GM10248 (cell line): ENCODE measurements at regions of chr2 and their contacts with region 1.

Region 1: DNA sequence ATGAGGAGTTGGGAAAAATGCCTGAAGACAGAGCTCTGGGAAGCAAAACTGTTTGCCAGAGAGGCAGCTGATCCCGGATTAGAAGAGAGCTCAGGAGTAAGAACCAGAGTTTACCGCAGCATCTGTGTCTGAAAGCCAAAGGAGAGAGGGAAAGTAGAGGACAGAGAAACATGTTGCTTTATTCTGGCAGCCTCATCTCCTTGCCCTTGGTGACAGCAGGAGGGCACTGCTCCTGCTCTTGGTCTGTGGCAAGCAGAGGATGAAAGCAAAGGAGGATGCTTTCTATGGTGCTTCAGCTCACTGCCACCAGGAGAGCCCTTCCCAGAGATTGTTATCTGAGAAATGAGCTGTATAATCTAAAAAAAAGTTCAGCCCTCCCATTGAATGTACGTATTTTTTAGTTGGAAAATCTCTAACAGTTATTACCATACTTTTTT is 7.7 kb downstream of the SLC1A4 start:
- DNase-seq: no peak
- CTCF ChIP-seq: no peak

Region 2: GRCh38 chr2:64979744-64980143 is 17.1 kb before region 1 on chr2:
- CTCF ChIA-PET with region 1: no interaction called
- POLR2A ChIA-PET with region 1: no interaction called
- DNase-seq: no peak
- CTCF ChIP-seq: no peak

Region 3: GRCh38 chr2:65017335-65017734 is 20.4 kb after region 1 on chr2:
- CTCF ChIA-PET with region 1: interaction called, 10 read pairs
- POLR2A ChIA-PET with region 1: no interaction called
- DNase-seq: peak; percentile 53
- CTCF ChIP-seq: peak; percentile 55